ENCODE measurements at regions of chr1 and their contacts with region 1.

Region 1: GRCh38 chr1:169348383-169349036 is 19.1 kb downstream of the NME7 start:
- DNase-seq: no peak
- H3K4me3 ChIP-seq: no peak overlapping the region
- H3K27ac ChIP-seq: no peak overlapping the region
- H3K4me1 ChIP-seq: no peaks in the 10 kb centered on the region
- H3K27me3 ChIP-seq: no peaks in the 10 kb centered on the region
- CTCF ChIP-seq: peak in 2 of 3 experiments; percentile 39 to 59; a peak in 2 of 4 replicates
- EP300 ChIP-seq: no peak
- POLR2A ChIP-seq: no peak
- RAD21 ChIP-seq: peak; percentile 86

Region 2: GRCh38 chr1:168609133-168609715 is 739.3 kb before region 1 on chr1:
- CTCF ChIA-PET with region 1: interaction called, 36 read pairs
- POLR2A ChIA-PET with region 1: no interaction called
- DNase-seq: peak in 1 of 2 experiments; percentile 52
- H3K4me3 ChIP-seq: no peak overlapping the region
- H3K27ac ChIP-seq: no peak overlapping the region
- H3K4me1 ChIP-seq: no peaks in the 10 kb centered on the region; a peak in 1 of 7 replicates
- H3K27me3 ChIP-seq: peaks cover 0 to 1% (median 0%) of the 10 kb centered on the region in 4 experiments; a peak in 1 of 7 replicates
- CTCF ChIP-seq: no peak
- EP300 ChIP-seq: no peak
- POLR2A ChIP-seq: no peak
- RAD21 ChIP-seq: no peak

Region 3: GRCh38 chr1:168637350-168637991 is 711.0 kb before region 1 on chr1:
- CTCF ChIA-PET with region 1: interaction called, 16 read pairs
- POLR2A ChIA-PET with region 1: no interaction called
- DNase-seq: no peak
- H3K4me3 ChIP-seq: no peak overlapping the region
- H3K27ac ChIP-seq: no peak overlapping the region
- H3K4me1 ChIP-seq: no peaks in the 10 kb centered on the region
- H3K27me3 ChIP-seq: no peaks in the 10 kb centered on the region
- CTCF ChIP-seq: peak in 2 of 3 experiments; percentile 60 to 94; a peak in 3 of 4 replicates
- EP300 ChIP-seq: no peak
- POLR2A ChIP-seq: no peak
- RAD21 ChIP-seq: peak; percentile 75 to 80

Region 4: GRCh38 chr1:169106095-169106920 is 242.2 kb before region 1 on chr1 and contains the start of gene ATP1B1:
- CTCF ChIA-PET with region 1: interaction called, 16 read pairs
- POLR2A ChIA-PET with region 1: interaction called, 3 read pairs
- DNase-seq: peak; percentile 63 to 95
- H3K4me3 ChIP-seq: peak within 1 kb of the TSS; percentile 76 to 93 (median 83)
- H3K27ac ChIP-seq: peak within 1 kb of the TSS; percentile 83
- H3K4me1 ChIP-seq: peaks cover 16 to 35% (median 23%) of the 10 kb centered on the region in 4 experiments
- H3K27me3 ChIP-seq: no peaks in the 10 kb centered on the region; a peak in 2 of 7 replicates
- CTCF ChIP-seq: no peak
- EP300 ChIP-seq: 0 out of 3 replicates have a peak, but pooled peaks of 1 of the 2 experiments have one; percentile 8
- POLR2A ChIP-seq: peak; percentile 92 to 96
- RAD21 ChIP-seq: no peak; a peak in 1 of 4 replicates
- total RNA-seq, gene ATP1B1: 76.4 and 76.5 TPM in 2 replicates

Region 5: GRCh38 chr1:169260478-169261151 is 87.9 kb before region 1 on chr1:
- CTCF ChIA-PET with region 1: no interaction called
- POLR2A ChIA-PET with region 1: no interaction called
- DNase-seq: no peak
- H3K4me3 ChIP-seq: no peak overlapping the region
- H3K27ac ChIP-seq: no peak overlapping the region
- H3K4me1 ChIP-seq: no peaks in the 10 kb centered on the region
- H3K27me3 ChIP-seq: no peaks in the 10 kb centered on the region
- CTCF ChIP-seq: no peak
- EP300 ChIP-seq: no peak
- POLR2A ChIP-seq: no peak
- RAD21 ChIP-seq: no peak

Region 6: GRCh38 chr1:169361281-169361680 is 12.8 kb after region 1 on chr1:
- CTCF ChIA-PET with region 1: interaction called, 16 read pairs
- POLR2A ChIA-PET with region 1: no interaction called
- DNase-seq: no peak
- H3K4me3 ChIP-seq: no peak overlapping the region
- H3K27ac ChIP-seq: no peak overlapping the region
- H3K4me1 ChIP-seq: no peaks in the 10 kb centered on the region
- H3K27me3 ChIP-seq: no peaks in the 10 kb centered on the region
- CTCF ChIP-seq: no peak
- EP300 ChIP-seq: no peak
- POLR2A ChIP-seq: no peak
- RAD21 ChIP-seq: no peak

Measured in H1 (cell line).